ENCODE measurements at regions of chrX and their contacts with region 1.

Region 1: DNA sequence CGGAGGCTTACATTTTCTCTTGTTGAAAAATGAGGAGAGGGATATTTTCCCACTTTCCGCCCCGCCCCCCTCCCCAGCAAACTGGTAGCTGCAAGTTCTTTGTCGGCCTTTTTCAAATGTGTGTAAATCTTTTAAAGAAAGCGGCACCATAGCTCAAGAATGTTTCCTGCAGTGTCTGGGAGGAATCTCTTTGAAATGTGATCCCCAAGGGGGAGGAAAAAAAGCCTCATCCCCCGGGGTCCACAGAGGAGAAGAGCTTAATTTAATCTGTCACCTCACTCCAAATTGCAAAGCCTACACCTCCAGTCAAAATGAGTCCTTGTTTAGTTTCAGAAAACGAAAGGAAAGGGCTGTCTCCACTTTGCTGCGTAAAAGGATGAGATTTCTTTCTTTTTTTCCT is 34.8 kb downstream of the ASMT start:
- DNase-seq: no peak
- ATAC-seq: no peak
- H3K4me3 ChIP-seq: no peak overlapping the region
- H3K27ac ChIP-seq: no peak overlapping the region
- H3K4me1 ChIP-seq: no peaks in the 10 kb centered on the region
- H3K27me3 ChIP-seq: no peaks in the 10 kb centered on the region
- CTCF ChIP-seq: no peak
- POLR2A ChIP-seq: no peak

Region 2: GRCh38 chrX:1734806-1735205 is 85.2 kb after region 1 on chrX:
- in situ Hi-C with region 1: no loop called
- intact Hi-C with region 1: no loop called
- DNase-seq: no peak
- ATAC-seq: no peak
- H3K4me3 ChIP-seq: no peak overlapping the region
- H3K27ac ChIP-seq: no peak overlapping the region
- H3K4me1 ChIP-seq: no peaks in the 10 kb centered on the region
- H3K27me3 ChIP-seq: no peaks in the 10 kb centered on the region
- CTCF ChIP-seq: no peak
- POLR2A ChIP-seq: no peak

Region 3: DNA sequence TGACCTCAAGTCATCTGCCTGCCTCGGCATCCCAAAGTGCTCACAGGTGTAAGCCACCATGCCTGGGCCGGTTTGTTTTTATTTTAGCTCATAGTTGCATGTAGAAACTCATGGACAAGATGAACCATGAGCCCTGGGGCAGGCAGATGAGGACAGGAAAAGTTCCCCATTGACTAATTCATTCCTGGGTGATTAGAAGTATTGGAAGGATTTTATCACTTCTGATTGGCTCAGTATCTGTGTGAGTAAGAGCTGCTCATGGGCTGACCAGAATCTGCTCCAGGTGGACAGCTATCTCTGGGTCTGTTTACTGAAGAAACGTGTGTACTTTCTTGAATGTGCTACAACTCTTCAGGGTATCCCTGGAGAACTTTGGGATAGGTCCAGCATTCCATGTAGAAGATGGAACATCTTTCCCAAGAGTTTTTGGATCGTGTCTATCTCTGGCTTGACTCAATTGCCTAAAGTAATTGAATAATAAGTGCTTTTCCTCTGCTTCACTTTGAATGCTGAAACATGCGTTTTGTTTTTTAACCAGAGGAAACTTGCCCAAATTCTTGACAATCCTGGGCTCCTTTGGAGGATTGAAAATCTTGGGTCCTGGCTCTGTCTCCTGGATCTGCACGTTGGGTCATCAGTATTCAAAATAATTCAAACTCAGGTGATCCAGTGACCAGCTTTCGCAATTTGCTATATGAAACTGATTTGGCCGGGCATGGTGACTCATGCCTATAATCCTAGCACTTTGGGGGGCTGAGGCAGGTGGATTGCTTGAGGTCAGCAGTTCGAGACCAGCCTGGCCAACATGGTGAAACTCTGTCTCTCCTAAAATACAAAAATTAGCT is 939.8 kb after region 1 on chrX:
- in situ Hi-C with region 1: loop called in 3 of 4 experiments (anchors 5 to 25 kb)
- intact Hi-C with region 1: loop called (anchors 2 kb)
- DNase-seq: peak in 1 of 2 donors; percentile 35
- ATAC-seq: peak; percentile 51 to 63
- H3K4me3 ChIP-seq: no peak overlapping the region
- H3K27ac ChIP-seq: no peak overlapping the region
- H3K4me1 ChIP-seq: no peaks in the 10 kb centered on the region
- H3K27me3 ChIP-seq: peaks cover 7 to 8% (median 7%) of the 10 kb centered on the region in 3 donors
- CTCF ChIP-seq: no peak
- POLR2A ChIP-seq: no peak

Region 4: GRCh38 chrX:2595258-2595657 is 945.6 kb after region 1 on chrX:
- in situ Hi-C with region 1: loop called (anchors 5 to 25 kb)
- intact Hi-C with region 1: loop called (anchors 2 kb)
- DNase-seq: no peak
- ATAC-seq: peak in 1 of 2 donors; percentile 60
- H3K4me3 ChIP-seq: no peak overlapping the region
- H3K27ac ChIP-seq: no peak overlapping the region
- H3K4me1 ChIP-seq: no peaks in the 10 kb centered on the region
- H3K27me3 ChIP-seq: no peaks in the 10 kb centered on the region
- CTCF ChIP-seq: no peak
- POLR2A ChIP-seq: no peak